Psoas muscle (tissue), 8 donors: ENCODE measurements at regions of chr9 and their contacts with region 1.

Region 1: DNA sequence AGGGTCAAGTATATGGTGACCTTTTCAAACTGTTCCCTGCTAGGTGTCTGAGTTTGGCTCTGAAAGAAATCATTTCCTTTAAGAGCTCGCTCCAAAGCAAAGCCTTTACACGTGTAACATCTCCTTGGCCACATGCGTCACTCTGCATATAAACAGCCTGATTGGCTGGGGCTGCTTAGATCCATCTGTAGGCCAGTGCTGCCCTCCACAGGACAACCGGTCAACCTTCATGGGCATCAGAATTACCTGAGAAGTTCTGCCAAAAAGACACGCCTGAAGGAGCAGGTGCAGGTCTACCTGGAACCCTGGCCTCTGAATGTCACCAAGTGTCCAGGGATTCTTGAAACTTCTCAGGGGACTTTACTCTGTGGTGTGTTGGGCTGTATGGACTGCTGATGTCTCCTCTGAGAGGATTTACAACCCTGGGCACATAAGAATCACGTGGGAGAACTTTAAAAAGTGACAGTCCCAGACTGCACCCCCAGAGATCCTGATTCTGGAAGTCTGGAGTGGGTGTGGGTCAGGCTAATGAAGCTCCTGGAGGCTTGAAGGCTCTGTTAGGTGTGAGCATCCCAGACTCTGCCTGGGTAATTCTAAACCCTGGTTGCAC is 497.6 kb downstream of the GADD45G start:
- DNase-seq: peak; percentile 73 to 85
- ATAC-seq: peak; percentile 73 to 87 (median 78)
- H3K4me3 ChIP-seq: no peak overlapping the region
- H3K27ac ChIP-seq: no peak overlapping the region
- H3K4me1 ChIP-seq: peaks cover 25% of the 10 kb centered on the region
- H3K27me3 ChIP-seq: no peaks in the 10 kb centered on the region
- CTCF ChIP-seq: peak; percentile 83

Region 2: DNA sequence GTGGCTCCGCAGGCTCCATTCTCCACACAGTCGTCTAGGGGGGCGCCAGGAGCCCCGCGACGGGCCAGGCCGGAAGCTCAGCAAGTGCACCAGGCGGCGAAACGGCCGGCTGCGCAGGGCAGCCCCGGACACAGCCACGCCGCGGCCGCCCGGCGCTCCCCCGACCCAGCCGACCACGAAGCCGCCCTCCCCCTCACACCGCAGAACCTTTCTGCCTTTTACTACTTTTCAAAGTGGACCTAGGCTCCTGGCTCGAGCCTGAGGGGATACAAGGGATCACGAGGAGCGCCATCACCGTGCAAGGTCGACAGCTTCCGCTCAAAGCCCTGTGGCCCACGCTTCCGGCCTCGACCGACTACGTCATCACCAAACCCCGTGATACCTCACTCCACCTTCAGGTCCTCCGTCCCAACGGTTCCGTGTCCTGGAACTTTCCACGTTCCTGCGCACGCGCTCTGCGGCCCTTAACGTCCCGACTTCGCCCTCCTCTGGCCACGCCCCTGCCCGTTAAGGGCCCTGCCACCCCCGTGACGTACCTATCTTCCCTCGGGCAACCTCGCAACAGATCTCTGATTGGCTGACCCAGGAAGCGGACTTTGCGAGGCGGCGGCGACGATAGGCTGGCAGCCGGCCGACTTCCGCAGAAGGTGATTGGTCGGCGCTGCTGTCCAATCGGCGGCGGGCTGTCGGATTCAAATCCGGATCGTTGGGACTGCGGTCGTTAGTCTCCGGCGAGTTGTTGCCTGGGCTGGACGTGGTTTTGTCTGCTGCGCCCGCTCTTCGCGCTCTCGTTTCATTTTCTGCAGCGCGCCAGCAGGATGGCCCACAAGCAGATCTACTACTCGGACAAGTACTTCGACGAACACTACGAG is 791.7 kb before region 1 on chr9 and contains the start of gene CKS2:
- intact Hi-C with region 1: loop called in 1 of 2 experiments (anchors 5 kb)
- DNase-seq: peak; percentile 100
- ATAC-seq: peak; percentile 94 to 97 (median 96)
- H3K4me3 ChIP-seq: peak within 1 kb of the TSS; percentile 76
- H3K27ac ChIP-seq: peak within 1 kb of the TSS; percentile 100
- H3K4me1 ChIP-seq: peaks cover 22% of the 10 kb centered on the region
- H3K27me3 ChIP-seq: no peaks in the 10 kb centered on the region
- CTCF ChIP-seq: no peak
- total RNA-seq, gene CKS2: 3.6 to 14.4 (median 10.6) TPM

Region 3: GRCh38 chr9:89597711-89598625 is 504.4 kb before region 1 on chr9:
- intact Hi-C with region 1: loop called (anchors 1 to 2 kb)
- DNase-seq: no peak
- ATAC-seq: peak; percentile 61 to 79 (median 68)
- H3K4me3 ChIP-seq: no peak overlapping the region
- H3K27ac ChIP-seq: no peak overlapping the region
- H3K4me1 ChIP-seq: no peaks in the 10 kb centered on the region
- H3K27me3 ChIP-seq: no peaks in the 10 kb centered on the region
- CTCF ChIP-seq: peak; percentile 87

Region 4: GRCh38 chr9:89878687-89879086 is 223.7 kb before region 1 on chr9:
- intact Hi-C with region 1: loop called (anchors 5 kb)
- DNase-seq: peak; percentile 83 to 95
- ATAC-seq: peak; percentile 87 to 94 (median 90)
- H3K4me3 ChIP-seq: no peak overlapping the region
- H3K27ac ChIP-seq: peak overlapping the region; percentile 72
- H3K4me1 ChIP-seq: peaks cover 49% of the 10 kb centered on the region
- H3K27me3 ChIP-seq: no peaks in the 10 kb centered on the region
- CTCF ChIP-seq: no peak

Region 5: DNA sequence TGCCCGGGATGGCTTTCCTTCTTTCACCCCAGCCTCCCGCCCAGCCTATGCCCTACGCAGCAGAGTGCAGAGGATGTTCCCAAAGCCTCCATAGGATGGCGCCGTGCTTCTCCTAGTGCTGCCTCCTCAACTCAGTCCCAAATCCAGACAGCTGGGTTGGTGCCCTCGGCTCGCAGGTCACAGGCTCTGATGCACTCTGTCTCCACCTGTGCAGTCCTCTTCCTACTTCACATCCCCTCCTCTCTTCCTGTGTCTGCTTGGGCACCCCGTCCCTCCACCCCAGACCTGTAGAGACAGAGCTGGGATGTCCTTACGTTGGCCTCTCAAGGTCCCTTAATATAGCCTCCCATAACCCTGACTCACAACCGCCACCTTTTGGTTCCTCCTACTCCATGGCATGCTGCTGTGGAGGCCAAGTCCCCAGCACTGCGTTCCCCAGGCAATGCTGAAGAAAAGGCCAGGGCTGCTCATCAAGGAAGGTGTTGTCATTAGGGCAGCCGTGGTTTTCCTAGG is 183.2 kb before region 1 on chr9:
- intact Hi-C with region 1: loop called (anchors 5 kb)
- DNase-seq: no peak
- ATAC-seq: peak; percentile 83 to 97 (median 90)
- H3K4me3 ChIP-seq: no peak overlapping the region
- H3K27ac ChIP-seq: no peak overlapping the region
- H3K4me1 ChIP-seq: no peaks in the 10 kb centered on the region
- H3K27me3 ChIP-seq: no peaks in the 10 kb centered on the region
- CTCF ChIP-seq: peak; percentile 39

Region 6: DNA sequence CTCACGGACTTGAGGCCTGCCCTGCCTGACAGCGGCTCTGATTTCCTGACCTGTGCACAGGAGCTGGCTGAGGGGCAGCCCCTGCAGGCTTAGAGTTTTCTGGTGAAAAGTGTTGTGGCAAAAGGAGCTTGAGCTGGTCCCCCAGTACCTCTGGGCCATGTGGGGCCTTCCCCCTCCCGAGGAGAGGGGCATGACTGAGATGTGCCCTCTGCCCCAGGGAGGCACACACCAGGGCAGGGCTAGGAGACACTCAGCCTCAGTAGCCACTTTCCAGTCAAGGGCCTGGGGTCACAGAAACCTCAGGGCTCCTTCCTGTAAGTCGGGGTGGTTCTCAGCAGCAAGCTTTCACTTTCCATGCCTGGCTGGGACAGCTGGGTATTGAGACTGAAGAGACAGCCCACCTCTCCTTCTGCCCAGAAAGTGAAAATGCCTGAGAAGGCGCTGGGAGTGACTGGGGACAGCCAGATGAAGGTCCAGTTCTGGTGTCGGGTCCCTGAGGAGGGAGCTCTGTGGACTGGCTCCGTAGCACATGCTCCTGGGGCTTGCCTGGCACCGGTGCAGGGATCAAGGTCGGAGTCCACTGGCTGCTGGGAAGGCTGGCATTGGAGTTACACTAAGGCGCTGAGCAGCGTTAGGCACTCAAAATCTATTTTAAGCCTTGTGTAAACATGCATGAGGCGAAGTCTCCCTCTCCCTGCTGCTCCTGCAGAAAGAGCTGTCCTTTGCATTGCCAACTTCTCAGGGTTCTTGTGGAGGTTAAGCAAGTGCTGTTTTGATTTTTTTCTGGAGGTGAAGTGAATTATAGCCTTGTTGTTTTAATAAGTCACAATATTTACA is 102.6 kb before region 1 on chr9:
- intact Hi-C with region 1: loop called in 1 of 2 experiments (anchors 5 kb)
- DNase-seq: peak; percentile 67 to 87
- ATAC-seq: peak; percentile 88 to 95 (median 92)
- H3K4me3 ChIP-seq: peak overlapping the region; percentile 17
- H3K27ac ChIP-seq: peak overlapping the region; percentile 82
- H3K4me1 ChIP-seq: peaks cover 52% of the 10 kb centered on the region
- H3K27me3 ChIP-seq: no peaks in the 10 kb centered on the region
- CTCF ChIP-seq: no peak